Psoas muscle (tissue), 8 donors: ENCODE measurements at regions of chr18 and their contacts with region 1.

Region 1: DNA sequence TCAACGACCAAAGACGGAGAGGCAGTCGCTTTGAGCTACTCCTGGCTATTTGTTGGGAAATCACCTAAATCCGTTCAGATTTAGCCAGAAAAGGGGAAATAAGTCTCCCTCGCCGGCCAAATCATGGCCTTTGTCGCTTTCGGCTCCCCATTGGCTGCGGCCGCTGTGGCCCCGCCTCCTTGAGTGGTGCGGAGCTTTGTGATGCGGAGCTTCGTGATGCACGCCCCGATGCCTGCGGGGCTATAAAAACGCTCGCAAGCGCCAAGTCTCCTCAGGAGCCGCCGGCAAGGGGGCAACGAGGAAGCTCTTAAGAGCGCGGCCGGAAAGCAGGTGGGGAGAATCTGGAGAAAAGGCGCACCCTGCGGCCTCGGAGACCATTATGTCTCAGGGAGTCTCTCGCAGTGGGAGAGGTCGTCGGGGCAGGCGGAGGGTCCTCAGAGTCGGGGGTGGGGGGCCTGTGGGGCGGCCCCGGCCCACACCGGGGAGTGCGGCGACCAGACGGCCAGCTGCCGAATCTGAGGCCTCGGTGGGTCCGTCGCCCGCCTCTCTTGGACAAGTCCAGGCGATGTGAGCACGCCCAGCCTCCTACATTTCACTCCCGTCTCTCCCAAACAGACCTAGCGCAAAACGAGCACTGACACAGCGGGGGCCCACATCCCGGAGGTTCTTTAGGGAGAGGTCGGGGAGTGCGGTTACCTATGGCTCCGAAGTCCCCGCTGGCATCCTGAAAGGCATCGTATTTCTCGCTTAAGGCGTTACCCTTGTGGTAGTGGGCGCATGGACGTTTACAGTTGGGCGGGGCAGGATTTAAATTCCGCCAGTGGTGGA is at the start of gene CABYR:
- DNase-seq: peak; percentile 71 to 78
- ATAC-seq: peak; percentile 39 to 72 (median 55)
- H3K4me3 ChIP-seq: peak within 1 kb of the TSS; percentile 60
- H3K27ac ChIP-seq: no peak within 1 kb of the TSS
- H3K4me1 ChIP-seq: no peaks in the 10 kb centered on the region
- H3K27me3 ChIP-seq: peaks cover 0 to 6% (median 0%) of the 10 kb centered on the region in 3 donors
- CTCF ChIP-seq: no peak
- total RNA-seq, gene CABYR: 1.2 TPM in 1 of 4 donors, not detected in the others

Region 2: GRCh38 chr18:22604390-22604985 is 1534.5 kb before region 1 on chr18:
- intact Hi-C with region 1: loop called in 1 of 2 experiments (anchors 5 kb)
- DNase-seq: peak in 1 of 2 donors; percentile 57
- ATAC-seq: peak in 1 of 4 donors; percentile 36
- H3K4me3 ChIP-seq: peak overlapping the region; percentile 22
- H3K27ac ChIP-seq: no peak overlapping the region
- H3K4me1 ChIP-seq: peaks cover 3% of the 10 kb centered on the region
- H3K27me3 ChIP-seq: peaks cover 0 to 9% (median 0%) of the 10 kb centered on the region in 3 donors
- CTCF ChIP-seq: no peak